ENCODE measurements at regions of chr9 and their contacts with region 1.

Region 1: DNA sequence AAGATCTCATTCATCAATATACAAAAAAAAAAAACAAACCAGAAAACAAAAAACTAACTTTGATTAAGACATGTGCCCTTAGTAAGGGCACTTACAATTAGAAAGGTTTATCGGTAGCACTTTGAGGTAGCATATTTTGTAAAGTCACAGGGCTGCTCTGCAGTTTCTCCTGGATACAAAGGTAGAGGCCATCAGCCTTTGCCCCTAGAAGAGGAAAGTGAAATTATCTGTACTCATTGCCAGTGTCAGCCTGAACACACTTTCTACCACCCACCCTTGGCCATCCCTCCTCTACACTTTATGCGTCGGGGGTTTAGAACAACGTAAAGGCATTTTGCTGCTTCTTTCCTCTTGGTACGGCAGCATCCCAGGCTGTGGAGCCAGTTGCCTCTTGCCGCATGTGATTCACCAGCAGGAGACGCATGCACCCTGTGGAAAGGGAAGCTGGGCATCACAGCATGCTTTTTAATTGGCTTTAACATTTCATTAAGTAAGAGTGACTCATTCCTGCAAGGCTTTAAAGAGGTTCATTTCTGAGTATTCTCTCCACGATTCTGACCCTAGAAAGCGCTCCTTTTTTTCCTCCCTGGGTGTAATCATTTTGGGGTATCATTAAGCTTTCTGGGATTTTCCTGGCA is 84.6 kb downstream of the CEMIP2 start:
- DNase-seq: no peak
- ATAC-seq: no peak
- H3K4me3 Mint-ChIP-seq: no peak overlapping the region
- H3K27ac Mint-ChIP-seq: peak overlapping the region; percentile 67
- H3K4me1 Mint-ChIP-seq: peaks cover 47% of the 10 kb centered on the region
- H3K27me3 Mint-ChIP-seq: no peaks in the 10 kb centered on the region
- CTCF ChIP-seq: no peak

Region 2: GRCh38 chr9:71271602-71272001 is 412.1 kb before region 1 on chr9:
- CTCF ChIA-PET with region 1: no interaction called
- POLR2A ChIA-PET with region 1: no interaction called
- intact Hi-C with region 1: no loop called
- DNase-seq: no peak
- ATAC-seq: no peak
- H3K4me3 Mint-ChIP-seq: no peak overlapping the region
- H3K27ac Mint-ChIP-seq: no peak overlapping the region
- H3K4me1 Mint-ChIP-seq: no peaks in the 10 kb centered on the region
- H3K27me3 Mint-ChIP-seq: peaks cover 2% of the 10 kb centered on the region
- CTCF ChIP-seq: no peak

Region 3: GRCh38 chr9:71628247-71628646 is 55.5 kb before region 1 on chr9:
- CTCF ChIA-PET with region 1: interaction called, 10 read pairs
- POLR2A ChIA-PET with region 1: no interaction called
- intact Hi-C with region 1: no loop called
- DNase-seq: peak; percentile 7
- ATAC-seq: peak; percentile 51
- H3K4me3 Mint-ChIP-seq: no peak overlapping the region
- H3K27ac Mint-ChIP-seq: no peak overlapping the region
- H3K4me1 Mint-ChIP-seq: no peaks in the 10 kb centered on the region
- H3K27me3 Mint-ChIP-seq: no peaks in the 10 kb centered on the region
- CTCF ChIP-seq: peak; percentile 33

Region 4: DNA sequence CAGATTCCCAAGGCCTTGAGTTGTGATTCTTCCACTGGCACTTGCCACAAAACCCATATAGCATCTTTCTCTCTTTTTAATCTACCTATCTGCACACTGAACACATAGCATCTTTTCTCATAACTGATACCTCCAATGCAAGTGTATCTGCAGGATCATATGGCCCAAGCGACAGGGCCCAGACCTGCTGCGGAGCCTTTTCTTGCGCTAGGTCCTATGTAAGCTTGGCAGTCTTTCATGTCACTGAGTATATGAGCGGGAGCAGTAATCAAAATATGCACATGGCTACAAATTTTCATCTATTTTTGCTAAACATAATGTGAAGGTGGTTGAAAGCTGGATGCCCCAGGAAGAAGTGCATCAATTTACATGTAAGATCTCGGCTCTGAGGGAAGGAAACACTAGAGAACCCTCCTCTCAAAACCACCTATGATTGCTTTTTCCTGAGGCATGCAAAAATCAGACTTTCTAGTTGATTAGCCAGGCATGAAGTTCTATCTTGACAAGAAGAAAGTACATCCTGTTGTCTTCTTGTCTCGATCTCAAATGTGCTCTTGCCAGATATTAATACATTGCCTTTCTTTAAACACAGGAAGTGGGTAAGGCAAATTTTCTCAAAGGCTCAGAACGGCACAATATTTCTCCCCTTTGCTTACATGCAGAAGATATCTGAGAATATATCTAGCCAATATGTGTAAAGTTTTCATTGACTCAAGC is 111.5 kb after region 1 on chr9:
- CTCF ChIA-PET with region 1: no interaction called
- POLR2A ChIA-PET with region 1: no interaction called
- intact Hi-C with region 1: no loop called
- DNase-seq: no peak
- ATAC-seq: peak; percentile 76
- H3K4me3 Mint-ChIP-seq: peak overlapping the region; percentile 27
- H3K27ac Mint-ChIP-seq: peak overlapping the region; percentile 88
- H3K4me1 Mint-ChIP-seq: peaks cover 63% of the 10 kb centered on the region
- H3K27me3 Mint-ChIP-seq: no peaks in the 10 kb centered on the region
- CTCF ChIP-seq: no peak

Region 5: DNA sequence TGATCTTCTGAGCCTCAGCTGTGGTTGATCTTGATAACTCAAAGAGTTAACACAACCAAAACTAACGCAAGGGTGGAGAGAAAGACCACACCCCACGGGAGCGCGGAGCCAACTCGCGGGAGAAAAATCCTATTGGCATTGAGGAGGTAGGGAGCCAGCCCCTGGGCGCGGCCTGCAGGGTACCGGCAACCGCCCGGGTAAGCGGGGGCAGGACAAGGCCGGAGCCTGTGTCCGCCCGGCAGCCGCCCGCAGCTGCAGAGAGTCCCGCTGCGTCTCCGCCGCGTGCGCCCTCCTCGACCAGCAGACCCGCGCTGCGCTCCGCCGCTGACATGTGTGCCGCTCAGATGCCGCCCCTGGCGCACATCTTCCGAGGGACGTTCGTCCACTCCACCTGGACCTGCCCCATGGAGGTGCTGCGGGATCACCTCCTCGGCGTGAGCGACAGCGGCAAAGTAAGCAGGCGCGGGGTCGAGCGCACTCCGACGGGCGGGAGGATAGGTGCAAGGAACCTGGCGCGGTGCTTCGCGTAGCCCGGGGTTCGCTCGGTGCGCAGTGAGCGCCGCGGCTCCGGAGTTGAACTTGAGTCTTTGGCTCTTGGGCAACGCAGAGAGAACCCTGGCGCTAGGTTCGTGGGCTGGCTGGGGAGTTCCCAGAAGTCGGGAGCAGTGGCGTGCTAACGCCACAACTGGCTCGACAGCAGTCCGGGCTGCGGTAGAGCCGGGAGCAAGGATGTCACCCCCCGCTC is 465.7 kb after region 1 on chr9 and contains the start of gene GDA:
- CTCF ChIA-PET with region 1: no interaction called
- POLR2A ChIA-PET with region 1: no interaction called
- intact Hi-C with region 1: no loop called
- DNase-seq: peak; percentile 7
- ATAC-seq: no peak
- H3K4me3 Mint-ChIP-seq: no peak within 1 kb of the TSS
- H3K27ac Mint-ChIP-seq: no peak within 1 kb of the TSS
- H3K4me1 Mint-ChIP-seq: no peaks in the 10 kb centered on the region
- H3K27me3 Mint-ChIP-seq: peaks cover 29% of the 10 kb centered on the region
- CTCF ChIP-seq: no peak
- total RNA-seq, gene GDA: not detected

Measured in activated CD8-positive, alpha-beta T cell treated with anti-CD3 and anti-CD28 coated beads for 36 hours (primary cell).